Transverse colon (tissue), 4 donors: ENCODE measurements at regions of chr2 and their contacts with region 1.

Region 1: DNA sequence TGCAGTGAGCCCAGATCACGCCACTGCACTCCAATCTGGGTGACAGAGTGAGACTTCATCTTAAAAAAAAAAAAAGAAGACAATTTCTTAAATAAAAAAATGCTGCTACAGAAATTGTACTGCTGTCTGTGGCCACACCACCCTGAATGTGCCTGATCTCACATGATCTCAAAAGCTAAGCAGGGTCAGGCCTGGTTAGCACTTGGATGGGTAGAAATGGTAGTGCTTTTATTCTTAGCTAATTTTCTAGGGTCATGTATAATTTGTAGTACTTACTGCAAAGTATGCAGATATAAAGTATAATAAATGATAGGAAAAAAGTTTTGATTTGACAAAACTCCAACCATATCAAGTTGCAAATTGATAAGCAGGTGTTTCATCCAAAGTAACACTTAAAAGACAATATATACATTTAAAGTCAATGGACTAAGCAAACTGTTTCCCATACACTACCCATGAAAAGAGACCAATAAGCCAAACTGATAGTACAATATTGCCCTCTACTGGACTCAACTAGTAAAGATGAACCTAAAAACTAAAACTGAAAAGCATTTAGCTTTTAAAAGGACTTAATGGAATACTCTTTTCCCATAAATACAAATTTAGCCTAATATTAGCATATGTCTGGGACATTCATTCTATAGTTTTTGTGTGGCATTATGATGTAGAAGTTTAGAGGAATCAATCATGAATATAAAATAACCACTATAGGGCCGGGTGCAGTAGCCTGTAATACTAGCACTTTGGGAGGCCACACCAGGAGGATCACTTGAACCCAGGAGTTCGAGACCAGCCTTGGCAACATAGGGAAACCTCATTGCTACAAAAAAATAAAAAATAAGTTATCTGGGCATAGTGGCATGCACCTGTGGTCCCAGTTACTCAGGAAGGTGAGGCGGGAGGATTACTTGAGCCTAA is 18.6 kb upstream of the PEX13 start:
- DNase-seq: no peak
- H3K4me3 ChIP-seq: no peak overlapping the region
- H3K27ac ChIP-seq: no peak overlapping the region
- H3K4me1 ChIP-seq: no peaks in the 10 kb centered on the region
- H3K27me3 ChIP-seq: no peaks in the 10 kb centered on the region
- CTCF ChIP-seq: peak; percentile 56 to 67 (median 62)
- EP300 ChIP-seq: no peak
- POLR2A ChIP-seq: no peak

Region 2: DNA sequence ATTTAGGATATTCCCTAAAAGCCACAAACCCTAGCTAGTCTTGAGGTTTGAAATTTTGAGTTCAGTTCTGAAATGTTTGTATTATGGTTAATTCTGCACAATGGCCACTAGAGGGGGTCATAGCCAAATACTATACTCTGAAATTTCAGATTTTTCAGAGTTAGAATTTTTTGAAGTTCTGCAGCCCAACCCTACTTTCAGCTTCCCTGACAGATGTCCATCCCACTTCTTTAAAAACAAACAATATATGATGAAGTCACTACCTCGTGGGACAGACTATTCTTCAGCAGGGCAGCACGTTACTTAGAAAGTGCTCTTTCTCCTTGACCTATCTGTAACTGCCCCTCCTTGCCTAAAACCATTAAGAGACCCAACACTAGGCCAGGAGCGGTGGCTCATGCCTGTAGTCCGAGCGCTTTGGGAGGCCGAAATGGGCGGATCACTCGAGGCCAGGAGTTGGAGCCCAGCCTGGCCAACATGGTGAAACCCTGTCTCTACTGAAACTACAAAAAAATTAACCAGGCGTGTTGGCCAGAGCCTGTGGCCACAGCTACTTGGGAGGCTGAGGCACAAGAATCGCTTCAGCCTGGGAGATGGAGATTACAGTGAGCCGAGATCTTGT is 291.0 kb before region 1 on chr2:
- in situ Hi-C with region 1: loop called (anchors 5 to 10 kb)
- intact Hi-C with region 1: no loop called
- DNase-seq: no peak
- H3K4me3 ChIP-seq: no peak overlapping the region
- H3K27ac ChIP-seq: no peak overlapping the region
- H3K4me1 ChIP-seq: no peaks in the 10 kb centered on the region
- H3K27me3 ChIP-seq: no peaks in the 10 kb centered on the region
- CTCF ChIP-seq: peak; percentile 61 to 76 (median 74)
- EP300 ChIP-seq: no peak
- POLR2A ChIP-seq: no peak

Region 3: DNA sequence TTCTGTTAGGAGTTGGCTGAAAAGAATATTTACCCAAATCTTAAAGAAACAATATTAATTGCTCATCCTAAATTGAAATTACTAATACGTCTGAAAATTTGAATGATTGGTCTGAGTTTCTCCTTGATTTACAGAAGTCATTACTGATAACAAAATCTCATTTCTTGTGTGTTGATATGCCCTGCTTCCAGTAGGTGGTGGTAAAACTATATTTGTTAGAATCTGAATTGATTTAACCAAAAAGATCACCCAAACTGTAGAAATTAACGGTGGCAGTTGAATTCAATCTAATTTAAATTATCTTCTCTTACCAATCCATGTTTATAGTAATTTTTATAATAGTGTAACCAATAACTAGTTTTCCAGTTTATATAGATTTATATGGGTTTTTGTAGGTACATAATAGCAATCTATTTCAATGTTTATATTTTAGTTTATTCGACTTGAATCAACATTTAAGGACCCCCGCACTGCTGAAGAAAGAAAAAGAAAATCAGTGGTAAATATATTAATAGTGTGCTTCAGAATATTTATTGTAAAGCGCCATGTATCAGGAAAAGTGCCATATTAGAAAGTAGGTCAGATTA is 204.5 kb before region 1 on chr2:
- in situ Hi-C with region 1: loop called in 2 of 4 experiments (anchors 10 kb)
- intact Hi-C with region 1: no loop called
- DNase-seq: no peak
- H3K4me3 ChIP-seq: no peak overlapping the region
- H3K27ac ChIP-seq: no peak overlapping the region
- H3K4me1 ChIP-seq: no peaks in the 10 kb centered on the region
- H3K27me3 ChIP-seq: no peaks in the 10 kb centered on the region
- CTCF ChIP-seq: peak; percentile 21 to 52 (median 43)
- EP300 ChIP-seq: no peak
- POLR2A ChIP-seq: no peak

Region 4: GRCh38 chr2:60806988-60807681 is 191.8 kb before region 1 on chr2:
- in situ Hi-C with region 1: loop called in 2 of 4 experiments (anchors 10 kb)
- intact Hi-C with region 1: no loop called
- DNase-seq: no peak
- H3K4me3 ChIP-seq: no peak overlapping the region
- H3K27ac ChIP-seq: no peak overlapping the region
- H3K4me1 ChIP-seq: no peaks in the 10 kb centered on the region
- H3K27me3 ChIP-seq: no peaks in the 10 kb centered on the region
- CTCF ChIP-seq: no peak
- EP300 ChIP-seq: no peak
- POLR2A ChIP-seq: no peak

Region 5: DNA sequence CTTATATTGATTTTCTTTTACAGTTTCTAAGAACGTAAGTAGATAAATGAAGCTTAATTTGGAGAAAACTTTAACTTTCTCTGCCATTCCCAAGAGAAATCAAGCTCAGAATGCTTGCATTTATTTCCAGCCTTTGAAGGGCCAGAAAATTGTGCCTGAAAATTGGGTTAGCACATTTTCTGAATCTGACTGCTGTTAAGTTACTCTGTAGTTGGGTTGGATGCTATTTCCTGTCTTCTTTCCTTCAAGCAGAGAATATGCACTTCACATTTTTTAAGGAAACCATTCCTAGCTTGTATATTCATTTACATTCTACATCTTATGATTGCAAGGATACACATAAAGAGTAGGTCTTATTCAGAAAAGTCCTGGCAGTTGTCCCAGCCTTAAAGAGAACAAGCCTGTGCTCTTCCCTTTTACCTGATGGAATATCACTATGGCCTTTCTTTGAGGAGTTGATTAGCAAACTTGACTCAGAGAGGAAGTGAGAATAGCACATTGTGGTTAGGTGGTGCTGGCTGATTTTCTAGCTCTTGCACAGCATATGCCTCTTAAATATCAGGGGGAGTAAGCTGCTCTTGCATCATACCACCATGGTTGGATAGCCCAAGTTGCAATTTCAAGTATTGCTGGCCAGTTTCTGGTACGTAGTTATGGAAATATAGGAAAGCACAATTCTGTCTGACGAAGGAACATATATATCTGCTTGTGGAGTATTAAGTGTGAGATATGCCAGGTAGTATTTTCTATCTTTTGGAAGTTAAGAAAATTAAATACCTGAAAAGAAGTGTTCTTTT is 1040.3 kb after region 1 on chr2:
- in situ Hi-C with region 1: no loop called
- intact Hi-C with region 1: no loop called
- DNase-seq: no peak
- H3K4me3 ChIP-seq: no peak overlapping the region
- H3K27ac ChIP-seq: no peak overlapping the region
- H3K4me1 ChIP-seq: peaks cover 0 to 22% (median 0%) of the 10 kb centered on the region in 4 donors
- H3K27me3 ChIP-seq: no peaks in the 10 kb centered on the region
- CTCF ChIP-seq: no peak
- EP300 ChIP-seq: no peak
- POLR2A ChIP-seq: no peak